GM18951 (cell line): ENCODE measurements at regions of chr17 and their contacts with region 1.

Region 1: GRCh38 chr17:16516594-16517051 is 24.6 kb upstream of the LRRC75A start:
- POLR2A ChIP-seq: no peak

Region 2: GRCh38 chr17:16339937-16340336 is 176.7 kb before region 1 on chr17:
- in situ Hi-C with region 1: no loop called
- POLR2A ChIP-seq: no peak

Region 3: GRCh38 chr17:16363749-16364536 is 152.7 kb before region 1 on chr17:
- in situ Hi-C with region 1: loop called (anchors 5 kb)
- POLR2A ChIP-seq: no peak

Region 4: DNA sequence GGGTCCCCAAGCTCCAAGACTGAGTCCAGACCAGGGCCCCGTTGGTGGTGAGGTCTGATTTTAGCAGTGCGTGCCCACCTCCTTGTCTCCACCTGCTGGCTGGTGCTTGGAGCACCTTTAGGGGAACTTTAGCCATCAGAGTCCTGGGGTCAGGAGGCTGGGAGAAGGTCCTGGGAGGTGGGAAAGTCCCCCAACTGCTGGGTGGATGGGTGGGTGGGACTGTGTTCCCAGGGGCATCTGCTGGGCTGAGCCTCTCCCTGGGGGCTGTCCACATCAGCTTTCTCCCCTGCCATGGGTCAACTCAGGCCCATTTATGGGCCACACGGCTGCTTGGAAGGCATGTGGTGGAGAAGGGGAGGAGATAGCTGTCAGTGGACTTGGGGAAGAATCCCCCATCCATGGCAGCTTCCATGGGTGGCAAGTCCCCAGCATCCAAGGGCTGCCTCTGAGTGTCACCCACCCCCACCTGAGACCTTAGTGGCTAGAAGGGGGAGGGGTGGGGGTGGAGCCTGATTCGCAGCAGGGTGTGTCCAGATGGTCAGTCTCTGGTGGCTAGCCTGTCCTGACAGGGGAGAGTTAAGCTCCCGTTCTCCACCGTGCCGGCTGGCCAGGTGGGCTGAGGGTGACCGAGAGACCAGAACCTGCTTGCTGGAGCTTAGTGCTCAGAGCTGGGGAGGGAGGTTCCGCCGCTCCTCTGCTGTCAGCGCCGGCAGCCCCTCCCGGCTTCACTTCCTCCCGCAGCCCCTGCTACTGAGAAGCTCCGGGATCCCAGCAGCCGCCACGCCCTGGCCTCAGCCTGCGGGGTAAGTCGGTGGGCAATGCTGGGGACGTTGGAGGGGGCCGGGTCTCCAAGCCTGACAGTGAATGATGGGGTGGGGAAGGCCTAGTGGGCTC is 101.3 kb before region 1 on chr17 and contains the start of gene TRPV2:
- in situ Hi-C with region 1: no loop called
- POLR2A ChIP-seq: peak; percentile 65

Region 5: DNA sequence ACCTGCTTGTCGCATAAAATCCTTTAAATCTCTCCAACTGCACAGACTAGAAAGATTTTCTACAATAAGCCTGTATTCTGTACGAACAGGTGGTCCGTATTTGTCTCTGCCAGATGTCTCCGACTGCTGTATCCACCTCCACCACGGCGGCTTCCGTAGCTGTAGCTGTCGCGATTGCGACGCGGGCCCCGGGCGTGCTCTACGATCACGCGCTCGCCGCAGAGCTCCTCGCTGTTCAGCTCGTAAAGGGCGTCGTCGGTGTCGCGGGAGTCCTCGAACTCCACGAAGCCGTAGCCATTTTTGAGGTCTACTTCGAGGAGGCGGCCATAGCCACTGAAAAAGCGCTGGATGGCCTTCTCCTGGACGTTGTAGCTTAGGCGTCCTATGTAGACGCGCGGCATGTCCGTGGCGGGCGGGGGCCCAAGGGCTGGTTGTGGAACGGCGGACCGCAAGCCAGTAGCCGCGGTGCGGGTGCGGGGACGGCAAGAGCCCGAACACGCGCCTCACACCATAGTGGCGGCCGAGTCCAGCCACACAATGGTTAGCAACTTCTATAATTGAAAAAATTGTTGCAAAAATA is 100.9 kb after region 1 on chr17:
- in situ Hi-C with region 1: no loop called
- POLR2A ChIP-seq: no peak